ENCODE measurements at regions of chr4 and their contacts with region 1.

Region 1: DNA sequence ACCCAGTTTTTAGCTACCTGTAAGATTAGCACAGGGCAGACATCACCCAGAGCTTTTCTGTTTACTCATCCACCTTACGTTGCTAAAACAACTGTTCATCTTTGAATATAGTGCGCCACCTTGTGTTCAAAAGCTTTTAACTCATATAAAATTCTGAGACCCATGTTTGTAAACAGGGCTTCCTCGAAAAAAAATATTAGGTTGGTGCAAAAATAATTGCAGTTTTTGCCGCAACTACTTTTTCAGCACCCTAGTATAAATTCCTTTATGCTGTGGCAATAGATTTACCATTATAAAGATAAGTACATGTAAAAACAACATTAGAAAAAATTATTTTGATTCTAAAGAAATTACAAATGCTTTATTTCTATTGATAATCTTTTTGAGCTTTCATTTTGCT is 147.9 kb downstream of the LRBA start:
- DNase-seq: no peak
- H3K4me3 ChIP-seq: no peak overlapping the region
- H3K27ac ChIP-seq: no peak overlapping the region
- H3K4me1 ChIP-seq: peaks cover 0 to 3% (median 0%) of the 10 kb centered on the region in 6 donors
- H3K27me3 ChIP-seq: no peaks in the 10 kb centered on the region
- CTCF ChIP-seq: peak; percentile 34 to 68 (median 58)
- POLR2A ChIP-seq: no peak

Region 2: DNA sequence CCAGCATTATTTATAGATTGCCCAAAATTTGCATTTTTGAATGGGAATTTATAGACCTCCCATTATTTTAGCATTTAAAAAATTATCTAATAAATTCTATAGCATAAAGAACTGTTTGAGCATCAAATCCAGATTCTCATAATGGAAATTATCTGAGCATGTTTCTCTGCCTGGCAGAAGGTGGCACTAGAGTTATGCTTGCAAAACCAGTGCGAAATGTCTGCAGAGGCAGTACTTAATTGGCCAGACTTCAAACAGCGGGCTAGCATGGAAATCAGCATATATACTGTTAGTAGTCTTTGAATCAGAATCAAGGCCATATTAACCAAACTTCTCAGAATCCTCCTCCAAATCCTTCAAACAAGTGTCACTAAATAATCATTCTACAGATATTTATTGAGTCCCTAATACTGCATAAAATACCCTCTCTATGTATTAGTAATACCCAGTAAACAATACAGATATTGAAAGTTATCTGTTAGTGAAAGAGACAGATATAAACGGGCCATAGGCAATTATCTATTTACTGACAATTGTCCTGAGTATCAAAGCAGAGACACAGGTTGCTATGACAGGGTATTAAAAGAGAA is 867.6 kb before region 1 on chr4:
- intact Hi-C with region 1: loop called (anchors 10 kb)
- DNase-seq: no peak
- H3K4me3 ChIP-seq: no peak overlapping the region
- H3K27ac ChIP-seq: no peak overlapping the region
- H3K4me1 ChIP-seq: peaks cover 0 to 7% (median 1%) of the 10 kb centered on the region in 6 donors
- H3K27me3 ChIP-seq: no peaks in the 10 kb centered on the region
- CTCF ChIP-seq: peak in 8 of 11 experiments; percentile 29 to 56 (median 44)
- POLR2A ChIP-seq: no peak

Region 3: DNA sequence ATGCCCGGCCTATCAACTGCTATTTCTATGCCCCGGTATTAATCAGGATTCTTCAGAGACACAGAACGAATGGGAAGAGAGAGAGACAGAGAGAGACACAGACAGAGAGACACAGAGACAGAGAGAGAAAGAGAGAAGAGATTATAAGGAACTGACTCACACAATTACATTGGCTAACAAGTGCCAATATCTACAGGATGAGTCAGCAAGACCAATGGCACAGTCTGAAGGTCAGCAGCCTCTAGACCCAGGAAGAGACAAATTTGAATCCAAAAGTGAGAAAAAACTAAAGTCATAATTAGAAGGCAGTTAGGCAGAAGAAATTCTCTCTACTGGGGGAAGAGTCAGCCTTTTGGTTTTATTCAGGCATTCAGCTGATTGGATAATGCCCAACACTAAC is 97.9 kb before region 1 on chr4:
- intact Hi-C with region 1: no loop called
- DNase-seq: no peak
- H3K4me3 ChIP-seq: no peak overlapping the region
- H3K27ac ChIP-seq: no peak overlapping the region
- H3K4me1 ChIP-seq: no peaks in the 10 kb centered on the region
- H3K27me3 ChIP-seq: no peaks in the 10 kb centered on the region
- CTCF ChIP-seq: no peak
- POLR2A ChIP-seq: no peak

Region 4: GRCh38 chr4:151147000-151147399 is 279.9 kb after region 1 on chr4:
- intact Hi-C with region 1: no loop called
- DNase-seq: no peak
- H3K4me3 ChIP-seq: no peak overlapping the region
- H3K27ac ChIP-seq: no peak overlapping the region
- H3K4me1 ChIP-seq: no peaks in the 10 kb centered on the region
- H3K27me3 ChIP-seq: no peaks in the 10 kb centered on the region
- CTCF ChIP-seq: no peak
- POLR2A ChIP-seq: no peak